ENCODE measurements at regions of chr2 and their contacts with region 1.

Region 1: DNA sequence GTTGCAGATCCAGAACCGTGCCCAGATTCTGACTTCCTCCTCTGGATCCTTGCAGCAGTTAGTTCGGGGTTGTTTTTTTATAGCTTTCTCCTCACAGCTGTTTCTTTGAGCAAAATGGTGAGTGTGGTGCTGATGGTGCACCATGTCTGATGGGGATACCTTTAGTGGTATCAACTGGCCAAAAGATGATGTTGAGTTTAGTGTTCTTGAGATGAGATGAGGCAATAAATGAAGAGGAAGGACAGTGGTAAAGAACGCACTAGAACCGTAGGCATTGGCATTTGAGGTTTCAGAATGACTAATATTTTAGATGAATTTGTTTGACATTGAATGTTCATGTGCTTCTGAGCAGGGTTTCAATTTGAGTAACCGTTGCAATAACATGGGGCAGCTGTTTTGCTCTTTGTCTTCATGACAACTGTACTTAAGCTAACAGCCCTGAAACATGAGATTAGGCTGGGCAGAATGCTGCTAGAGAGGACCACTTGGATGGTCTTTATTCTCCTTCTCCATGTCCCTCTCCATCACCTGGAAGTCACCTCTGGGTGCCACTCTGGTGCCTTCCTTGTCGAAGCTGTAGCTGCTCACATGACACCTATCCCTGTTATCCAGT is 3.9 kb downstream of the CTLA4 start:
- DNase-seq: peak; percentile 61
- H3K4me3 Mint-ChIP-seq: peak overlapping the region; percentile 92
- H3K27ac Mint-ChIP-seq: peak overlapping the region; percentile 98
- H3K4me1 Mint-ChIP-seq: peaks cover 74% of the 10 kb centered on the region
- H3K27me3 Mint-ChIP-seq: no peaks in the 10 kb centered on the region

Region 2: DNA sequence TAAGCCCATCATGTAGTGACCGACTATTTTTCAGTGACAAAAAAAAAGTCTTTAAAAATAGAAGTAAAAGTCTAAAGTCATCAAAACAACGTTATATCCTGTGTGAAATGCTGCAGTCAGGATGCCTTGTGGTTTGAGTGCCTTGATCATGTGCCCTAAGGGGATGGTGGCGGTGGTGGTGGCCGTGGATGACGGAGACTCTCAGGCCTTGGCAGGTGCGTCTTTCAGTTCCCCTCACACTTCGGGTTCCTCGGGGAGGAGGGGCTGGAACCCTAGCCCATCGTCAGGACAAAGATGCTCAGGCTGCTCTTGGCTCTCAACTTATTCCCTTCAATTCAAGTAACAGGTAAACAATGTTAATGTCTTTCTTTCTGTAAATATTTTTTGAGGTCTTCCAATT is 165.1 kb before region 1 on chr2 and contains the start of gene CD28:
- CTCF ChIA-PET with region 1: interaction called, 5 read pairs
- POLR2A ChIA-PET with region 1: interaction called, 141 read pairs
- intact Hi-C with region 1: loop called (anchors 2 kb)
- DNase-seq: peak; percentile 97
- H3K4me3 Mint-ChIP-seq: peak within 1 kb of the TSS; percentile 86
- H3K27ac Mint-ChIP-seq: peak within 1 kb of the TSS; percentile 99
- H3K4me1 Mint-ChIP-seq: peaks cover 49% of the 10 kb centered on the region
- H3K27me3 Mint-ChIP-seq: no peaks in the 10 kb centered on the region
- total RNA-seq, gene CD28: 279 to 285 TPM

Region 3: DNA sequence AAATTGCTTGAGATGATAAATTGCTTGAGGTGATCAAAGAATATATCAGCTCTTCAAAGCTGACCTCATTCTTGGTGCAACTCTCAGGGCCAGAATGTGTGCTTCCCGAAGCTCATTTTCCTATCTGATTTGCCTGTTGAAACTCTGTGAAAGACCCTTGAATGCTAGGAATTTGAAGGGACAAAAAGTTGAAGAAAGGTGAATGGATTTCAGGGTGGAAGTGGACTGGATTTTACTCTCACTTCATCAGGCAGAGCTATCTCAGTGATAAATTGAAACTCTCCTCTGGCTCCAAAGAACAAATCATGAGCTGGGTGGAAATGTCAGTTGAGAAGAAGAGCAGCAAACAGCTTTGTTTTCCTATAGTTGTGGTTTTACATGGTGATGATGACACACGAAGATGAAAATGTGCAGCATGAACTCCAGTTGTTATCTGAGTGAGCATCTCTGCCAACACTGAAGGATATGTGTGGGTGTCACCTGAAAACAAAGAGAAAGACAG is 130.6 kb before region 1 on chr2:
- CTCF ChIA-PET with region 1: interaction called, 9 read pairs
- POLR2A ChIA-PET with region 1: interaction called, 67 read pairs
- intact Hi-C with region 1: loop called (anchors 2 kb)
- DNase-seq: peak; percentile 65
- H3K4me3 Mint-ChIP-seq: peak overlapping the region; percentile 58
- H3K27ac Mint-ChIP-seq: peak overlapping the region; percentile 99
- H3K4me1 Mint-ChIP-seq: peaks cover 90% of the 10 kb centered on the region
- H3K27me3 Mint-ChIP-seq: no peaks in the 10 kb centered on the region

Region 4: GRCh38 chr2:203830304-203831055 is 41.0 kb before region 1 on chr2:
- CTCF ChIA-PET with region 1: no interaction called
- POLR2A ChIA-PET with region 1: interaction called, 38 read pairs
- intact Hi-C with region 1: loop called (anchors 1 kb)
- DNase-seq: peak; percentile 90
- H3K4me3 Mint-ChIP-seq: peak overlapping the region; percentile 58
- H3K27ac Mint-ChIP-seq: peak overlapping the region; percentile 98
- H3K4me1 Mint-ChIP-seq: peaks cover 34% of the 10 kb centered on the region
- H3K27me3 Mint-ChIP-seq: no peaks in the 10 kb centered on the region

Region 5: GRCh38 chr2:203893401-203893800 is 21.9 kb after region 1 on chr2:
- CTCF ChIA-PET with region 1: interaction called, 6 read pairs
- POLR2A ChIA-PET with region 1: interaction called, 185 read pairs
- intact Hi-C with region 1: loop called (anchors 1 kb)
- DNase-seq: no peak
- H3K4me3 Mint-ChIP-seq: peak overlapping the region; percentile 14
- H3K27ac Mint-ChIP-seq: peak overlapping the region; percentile 84
- H3K4me1 Mint-ChIP-seq: peaks cover 77% of the 10 kb centered on the region
- H3K27me3 Mint-ChIP-seq: no peaks in the 10 kb centered on the region

Region 6: GRCh38 chr2:203940039-203940438 is 68.6 kb after region 1 on chr2:
- CTCF ChIA-PET with region 1: interaction called, 3 read pairs
- POLR2A ChIA-PET with region 1: interaction called, 188 read pairs
- intact Hi-C with region 1: no loop called
- DNase-seq: no peak
- H3K4me3 Mint-ChIP-seq: peak overlapping the region; percentile 97
- H3K27ac Mint-ChIP-seq: peak overlapping the region; percentile 97
- H3K4me1 Mint-ChIP-seq: peaks cover 45% of the 10 kb centered on the region
- H3K27me3 Mint-ChIP-seq: no peaks in the 10 kb centered on the region

Region 7: GRCh38 chr2:204479557-204479956 is 608.1 kb after region 1 on chr2:
- CTCF ChIA-PET with region 1: no interaction called
- POLR2A ChIA-PET with region 1: no interaction called
- intact Hi-C with region 1: no loop called
- DNase-seq: peak; percentile 16
- H3K4me3 Mint-ChIP-seq: no peak overlapping the region
- H3K27ac Mint-ChIP-seq: no peak overlapping the region
- H3K4me1 Mint-ChIP-seq: no peaks in the 10 kb centered on the region
- H3K27me3 Mint-ChIP-seq: peaks cover 2% of the 10 kb centered on the region

Measured in activated CD4-positive, alpha-beta memory T cell treated with anti-CD3 and anti-CD28 coated beads for 36 hours (primary cell).